ENCODE measurements at regions of chr3 and their contacts with region 1.

Region 1: GRCh38 chr3:139111392-139112229 is 66.9 kb upstream of the PRR23C start:
- DNase-seq: no peak
- ATAC-seq: peak; percentile 74

Region 2: DNA sequence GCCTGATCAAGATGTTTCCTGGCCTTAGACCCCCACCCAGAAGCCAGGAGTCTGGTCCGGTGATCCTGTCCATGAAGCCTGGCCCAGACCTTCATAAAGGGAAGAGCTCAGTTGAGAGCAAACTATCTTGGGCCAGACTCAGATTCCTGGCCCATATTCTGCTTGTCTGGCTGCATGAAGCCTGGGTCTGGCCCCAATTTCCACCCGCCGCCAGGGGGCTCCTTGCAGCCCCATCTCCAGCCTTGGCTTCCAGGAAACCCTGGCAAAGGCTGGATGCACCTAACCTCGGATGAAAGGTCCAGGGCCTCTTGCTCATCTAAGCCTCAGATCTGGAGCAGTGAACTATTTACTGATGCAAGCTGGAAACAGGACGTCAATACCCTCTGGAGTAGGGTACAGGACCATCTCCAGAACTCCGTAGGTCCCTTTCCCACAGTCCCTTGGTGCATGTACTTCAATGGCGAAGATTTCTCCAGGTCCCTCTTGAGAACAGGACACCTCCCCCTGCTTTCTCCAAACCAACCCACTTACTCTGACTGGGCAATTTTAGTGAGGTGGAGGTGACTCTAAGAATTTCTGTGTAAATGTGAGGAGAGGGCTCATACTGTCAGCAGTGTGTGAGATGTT is 170.2 kb before region 1 on chr3:
- intact Hi-C with region 1: loop called (anchors 10 kb)
- DNase-seq: no peak
- ATAC-seq: no peak

Region 3: GRCh38 chr3:139227165-139227564 is 115.6 kb after region 1 on chr3:
- intact Hi-C with region 1: loop called (anchors 5 kb)
- DNase-seq: no peak
- ATAC-seq: peak; percentile 82

Region 4: DNA sequence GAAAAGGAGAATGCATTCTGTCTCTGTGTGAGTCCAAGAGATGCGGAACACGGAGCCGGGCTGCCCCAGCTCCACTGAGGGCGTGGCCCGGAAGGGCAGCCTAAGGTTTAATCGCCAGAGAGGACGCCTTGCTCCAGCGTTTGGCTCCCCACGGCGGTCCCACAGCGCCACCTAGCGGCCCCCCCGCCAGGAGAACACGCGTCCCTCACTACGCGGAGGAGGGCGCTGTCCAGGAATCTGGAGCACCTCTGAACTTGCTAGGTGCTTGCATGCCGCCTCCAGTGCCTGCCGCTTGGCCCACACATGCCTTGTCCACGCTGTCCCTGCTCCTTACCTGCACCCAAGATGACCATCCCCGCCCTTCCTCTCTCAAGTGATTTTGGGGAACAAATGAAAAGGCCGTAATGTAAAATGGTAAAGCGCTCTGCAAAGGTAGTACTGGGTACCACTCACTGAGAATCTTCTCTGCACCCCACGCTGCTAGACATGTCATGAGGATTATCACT is 217.8 kb after region 1 on chr3:
- intact Hi-C with region 1: loop called (anchors 2 kb)
- DNase-seq: peak; percentile 93
- ATAC-seq: peak; percentile 90